Dendritic cell treated with granulocyte-macrophage colony-stimulating factor and Interleukin-4, amounts not matched to agents 40 ng/mL and 50 ng/mL, for 4 days (primary cell): ENCODE measurements at regions of chr20 and their contacts with region 1.

Region 1: GRCh38 chr20:11204926-11205768 is 531.3 kb upstream of the JAG1 start:
- H3K4me3 Mint-ChIP-seq: no peak overlapping the region
- H3K27ac Mint-ChIP-seq: peak overlapping the region; percentile 11
- H3K4me1 Mint-ChIP-seq: peaks cover 29% of the 10 kb centered on the region
- H3K27me3 Mint-ChIP-seq: peaks cover 1% of the 10 kb centered on the region

Region 2: DNA sequence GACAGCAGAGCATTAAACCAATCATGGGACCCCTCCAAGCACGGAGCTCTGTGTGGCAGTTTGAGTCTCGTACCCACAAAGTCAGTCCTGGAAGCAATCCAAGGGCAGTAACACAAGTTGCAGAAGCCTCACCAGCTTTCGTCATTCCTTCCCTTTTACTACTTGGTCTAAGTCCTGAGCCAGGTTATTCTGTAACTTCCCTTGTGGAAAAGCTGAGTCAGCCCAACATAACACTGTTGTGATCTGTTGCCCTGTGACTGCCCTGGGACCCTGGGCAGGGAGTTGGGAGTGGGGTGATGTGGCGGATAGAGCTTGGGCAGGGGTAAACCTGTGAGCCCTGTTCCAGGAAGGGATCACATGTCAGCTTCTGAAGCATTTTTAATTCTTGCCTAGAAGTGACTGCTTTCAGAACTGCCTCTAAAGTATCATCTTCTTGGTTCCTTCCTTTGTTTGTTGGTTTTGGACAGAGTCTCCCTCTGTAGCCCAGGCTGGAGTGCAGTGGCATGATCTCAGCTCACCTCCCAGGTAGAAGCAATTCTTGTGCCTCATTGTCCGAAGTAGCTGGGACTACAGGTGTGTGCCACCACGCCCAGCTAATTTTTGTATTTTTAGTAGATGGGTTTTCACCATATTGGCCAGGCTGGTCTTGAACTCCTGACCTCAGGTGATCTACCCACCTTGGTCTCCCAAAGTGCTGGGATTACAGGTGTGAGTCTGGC is 347.6 kb before region 1 on chr20:
- intact Hi-C with region 1: loop called (anchors 10 kb)
- H3K4me3 Mint-ChIP-seq: no peak overlapping the region
- H3K27ac Mint-ChIP-seq: peak overlapping the region; percentile 54
- H3K4me1 Mint-ChIP-seq: peaks cover 27% of the 10 kb centered on the region
- H3K27me3 Mint-ChIP-seq: no peaks in the 10 kb centered on the region

Region 3: DNA sequence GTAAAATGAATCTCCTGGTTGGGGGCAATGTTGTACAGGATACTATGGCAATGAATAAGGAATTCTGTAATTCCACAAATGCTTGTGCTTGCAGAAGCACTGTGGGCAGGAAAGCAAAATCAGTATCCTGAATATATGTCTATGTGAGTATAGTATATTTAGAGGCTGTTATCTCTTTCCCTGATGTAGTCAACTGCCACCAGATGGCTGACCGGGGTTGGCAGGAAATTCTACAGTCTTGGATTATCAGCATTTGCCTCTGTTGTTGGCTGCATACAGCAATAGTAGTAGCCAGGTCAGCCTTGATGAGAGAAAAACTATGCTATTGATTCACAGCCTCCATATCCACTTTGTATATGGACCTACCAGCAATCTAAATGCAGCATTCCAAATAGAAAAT is 106.3 kb before region 1 on chr20:
- intact Hi-C with region 1: loop called (anchors 10 kb)
- H3K4me3 Mint-ChIP-seq: no peak overlapping the region
- H3K27ac Mint-ChIP-seq: no peak overlapping the region
- H3K4me1 Mint-ChIP-seq: peaks cover 45% of the 10 kb centered on the region
- H3K27me3 Mint-ChIP-seq: peaks cover 3% of the 10 kb centered on the region

Region 4: DNA sequence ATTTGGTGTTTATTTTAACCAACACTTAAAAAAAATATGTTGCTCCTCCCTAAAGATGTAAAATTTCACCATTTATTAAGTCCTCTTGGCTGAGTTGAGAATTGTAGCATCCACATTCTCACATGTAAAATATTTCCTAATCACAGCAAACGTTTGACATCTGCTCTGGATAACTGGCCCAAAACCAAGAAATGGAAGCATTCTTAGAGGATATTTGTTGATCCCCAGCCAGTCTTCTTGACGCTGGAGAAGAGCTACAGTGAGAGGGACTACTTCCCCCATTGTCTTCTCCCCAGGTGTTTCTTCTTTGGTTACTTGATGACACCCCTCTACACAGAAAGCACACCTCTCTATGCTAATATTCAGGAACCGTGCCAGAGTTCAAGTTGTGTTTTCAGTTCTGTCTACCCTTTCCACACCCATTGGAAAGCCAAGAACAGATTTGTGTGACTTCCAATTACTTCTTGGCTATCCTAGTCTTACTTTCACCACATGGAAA is 76.9 kb before region 1 on chr20:
- intact Hi-C with region 1: no loop called
- H3K4me3 Mint-ChIP-seq: no peak overlapping the region
- H3K27ac Mint-ChIP-seq: no peak overlapping the region
- H3K4me1 Mint-ChIP-seq: peaks cover 30% of the 10 kb centered on the region
- H3K27me3 Mint-ChIP-seq: peaks cover 3% of the 10 kb centered on the region

Region 5: GRCh38 chr20:11159728-11160127 is 45.4 kb before region 1 on chr20:
- intact Hi-C with region 1: loop called (anchors 2 kb)
- H3K4me3 Mint-ChIP-seq: peak overlapping the region; percentile 57
- H3K27ac Mint-ChIP-seq: peak overlapping the region; percentile 86
- H3K4me1 Mint-ChIP-seq: peaks cover 40% of the 10 kb centered on the region
- H3K27me3 Mint-ChIP-seq: peaks cover 7% of the 10 kb centered on the region

Region 6: DNA sequence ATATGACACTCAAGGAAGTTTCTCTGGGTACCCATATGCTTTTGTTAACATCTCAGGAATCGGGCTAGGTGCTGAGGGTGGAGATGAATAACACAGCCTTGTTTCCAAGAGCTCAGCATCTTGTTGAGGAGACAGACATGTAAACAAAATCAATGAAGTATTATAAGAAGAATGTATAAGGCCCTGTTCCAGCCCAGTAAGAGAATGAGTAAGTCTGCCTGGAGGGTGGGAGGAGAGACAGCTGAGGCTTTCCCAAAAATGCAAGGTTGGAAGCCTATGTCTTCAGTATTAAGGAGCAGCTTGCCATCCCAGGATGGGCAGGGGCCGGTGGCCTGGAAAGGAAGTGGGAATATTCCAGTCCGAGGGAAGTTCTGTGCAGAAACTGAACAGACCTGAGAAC is 97.3 kb after region 1 on chr20:
- intact Hi-C with region 1: no loop called
- H3K4me3 Mint-ChIP-seq: no peak overlapping the region
- H3K27ac Mint-ChIP-seq: no peak overlapping the region
- H3K4me1 Mint-ChIP-seq: no peaks in the 10 kb centered on the region
- H3K27me3 Mint-ChIP-seq: no peaks in the 10 kb centered on the region